Common myeloid progenitor, CD34-positive (primary cell): ENCODE measurements at regions of chr10 and their contacts with region 1.

Region 1: GRCh38 chr10:97612386-97612785 is 20.9 kb downstream of the MORN4 start:
- DNase-seq: peak; percentile 4 to 46 (median 38)
- H3K4me3 ChIP-seq: no peak overlapping the region
- H3K27ac ChIP-seq: no peak overlapping the region
- H3K4me1 ChIP-seq: no peaks in the 10 kb centered on the region
- H3K27me3 ChIP-seq: no peaks in the 10 kb centered on the region

Region 2: GRCh38 chr10:97572214-97572989 is 40.0 kb before region 1 on chr10 and contains the start of gene ANKRD2:
- CTCF ChIA-PET with region 1: interaction called, 20 read pairs
- POLR2A ChIA-PET with region 1: no interaction called
- DNase-seq: peak; percentile 67 to 85 (median 80)
- H3K4me3 ChIP-seq: no peak within 1 kb of the TSS
- H3K27ac ChIP-seq: no peak within 1 kb of the TSS
- H3K4me1 ChIP-seq: peaks cover 0 to 1% (median 0%) of the 10 kb centered on the region in 4 experiments
- H3K27me3 ChIP-seq: peaks cover 0 to under 1% (median 0%) of the 10 kb centered on the region in 5 experiments